ENCODE measurements at regions of chr7 and their contacts with region 1.

Region 1: GRCh38 chr7:13524076-13524475 is 465.4 kb downstream of the ETV1 start:
- DNase-seq: no peak
- ATAC-seq: no peak
- H3K4me3 ChIP-seq: no peak overlapping the region
- H3K4me3 Mint-ChIP-seq: no peak overlapping the region
- H3K27ac ChIP-seq: no peak overlapping the region
- H3K27ac Mint-ChIP-seq: no peak overlapping the region
- H3K4me1 ChIP-seq: no peaks in the 10 kb centered on the region
- H3K4me1 Mint-ChIP-seq: no peaks in the 10 kb centered on the region
- H3K27me3 ChIP-seq: no peaks in the 10 kb centered on the region
- H3K27me3 Mint-ChIP-seq: no peaks in the 10 kb centered on the region

Region 2: GRCh38 chr7:13540429-13540828 is 16.4 kb after region 1 on chr7:
- CTCF ChIA-PET with region 1: interaction called in 1 of 2 experiments, 10 read pairs
- POLR2A ChIA-PET with region 1: no interaction called
- DNase-seq: no peak
- ATAC-seq: no peak
- H3K4me3 ChIP-seq: no peak overlapping the region
- H3K4me3 Mint-ChIP-seq: no peak overlapping the region
- H3K27ac ChIP-seq: no peak overlapping the region
- H3K27ac Mint-ChIP-seq: no peak overlapping the region
- H3K4me1 ChIP-seq: no peaks in the 10 kb centered on the region
- H3K4me1 Mint-ChIP-seq: no peaks in the 10 kb centered on the region
- H3K27me3 ChIP-seq: no peaks in the 10 kb centered on the region
- H3K27me3 Mint-ChIP-seq: no peaks in the 10 kb centered on the region

Region 3: GRCh38 chr7:15305002-15305600 is 1781.0 kb after region 1 on chr7:
- CTCF ChIA-PET with region 1: no interaction called
- POLR2A ChIA-PET with region 1: no interaction called
- DNase-seq: no peak
- ATAC-seq: no peak
- H3K4me3 ChIP-seq: no peak overlapping the region
- H3K4me3 Mint-ChIP-seq: no peak overlapping the region
- H3K27ac ChIP-seq: no peak overlapping the region
- H3K27ac Mint-ChIP-seq: no peak overlapping the region
- H3K4me1 ChIP-seq: no peaks in the 10 kb centered on the region
- H3K4me1 Mint-ChIP-seq: no peaks in the 10 kb centered on the region
- H3K27me3 ChIP-seq: no peaks in the 10 kb centered on the region
- H3K27me3 Mint-ChIP-seq: no peaks in the 10 kb centered on the region

Measured in T-cell (primary cell).